ENCODE measurements at regions of chr5 and their contacts with region 1.

Region 1: GRCh38 chr5:36241631-36242533 is at the start of gene NADK2:
- DNase-seq: peak; percentile 83 to 97 (median 92)
- ATAC-seq: peak; percentile 85
- H3K4me3 ChIP-seq: peak within 1 kb of the TSS; percentile 78 to 81
- H3K4me3 Mint-ChIP-seq: peak within 1 kb of the TSS; percentile 87
- H3K27ac ChIP-seq: peak within 1 kb of the TSS; percentile 87 to 92
- H3K27ac Mint-ChIP-seq: peak within 1 kb of the TSS; percentile 89
- H3K4me1 ChIP-seq: peaks cover 22% of the 10 kb centered on the region
- H3K4me1 Mint-ChIP-seq: peaks cover 49% of the 10 kb centered on the region
- H3K27me3 ChIP-seq: no peaks in the 10 kb centered on the region
- H3K27me3 Mint-ChIP-seq: no peaks in the 10 kb centered on the region
- CTCF ChIP-seq: peak; percentile 59
- total RNA-seq, gene NADK2: 11.1 to 12.3 TPM

Region 2: DNA sequence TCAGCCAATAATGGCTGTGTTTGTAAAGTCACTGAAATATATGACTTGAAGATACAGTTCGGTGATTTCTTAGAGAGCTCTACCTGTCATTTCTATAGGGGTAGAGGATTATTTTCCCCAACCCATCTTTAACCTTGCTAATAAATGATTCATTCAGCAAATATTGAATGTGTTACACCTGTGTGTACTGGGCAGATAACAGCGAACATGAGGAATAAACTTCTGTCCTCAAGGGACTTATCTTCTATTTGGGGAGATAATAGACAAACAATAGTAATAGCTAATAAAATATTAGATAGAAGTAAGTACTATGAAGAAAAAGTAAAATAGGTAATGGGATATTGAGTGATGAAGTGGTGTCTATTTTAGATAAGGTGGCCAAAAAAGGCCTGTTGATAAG is 1393.7 kb before region 1 on chr5:
- CTCF ChIA-PET with region 1: no interaction called
- POLR2A ChIA-PET with region 1: interaction called, 10 read pairs
- intact Hi-C with region 1: no loop called
- DNase-seq: no peak
- ATAC-seq: no peak
- H3K4me3 ChIP-seq: no peak overlapping the region
- H3K4me3 Mint-ChIP-seq: no peak overlapping the region
- H3K27ac ChIP-seq: no peak overlapping the region
- H3K27ac Mint-ChIP-seq: no peak overlapping the region
- H3K4me1 ChIP-seq: no peaks in the 10 kb centered on the region
- H3K4me1 Mint-ChIP-seq: no peaks in the 10 kb centered on the region
- H3K27me3 ChIP-seq: no peaks in the 10 kb centered on the region
- H3K27me3 Mint-ChIP-seq: peaks cover 15% of the 10 kb centered on the region
- CTCF ChIP-seq: no peak

Region 3: GRCh38 chr5:34929150-34929719 is 1312.6 kb before region 1 on chr5 and contains the start of gene DNAJC21:
- CTCF ChIA-PET with region 1: no interaction called
- POLR2A ChIA-PET with region 1: interaction called, 5 read pairs
- intact Hi-C with region 1: loop called in 1 of 2 experiments (anchors 5 kb)
- DNase-seq: peak; percentile 94 to 99 (median 96)
- ATAC-seq: peak; percentile 90
- H3K4me3 ChIP-seq: peak within 1 kb of the TSS; percentile 72 to 87
- H3K4me3 Mint-ChIP-seq: peak within 1 kb of the TSS; percentile 97
- H3K27ac ChIP-seq: peak within 1 kb of the TSS; percentile 72 to 83
- H3K27ac Mint-ChIP-seq: peak within 1 kb of the TSS; percentile 94
- H3K4me1 ChIP-seq: peaks cover 27% of the 10 kb centered on the region
- H3K4me1 Mint-ChIP-seq: peaks cover 37% of the 10 kb centered on the region
- H3K27me3 ChIP-seq: no peaks in the 10 kb centered on the region
- H3K27me3 Mint-ChIP-seq: no peaks in the 10 kb centered on the region
- CTCF ChIP-seq: no peak
- total RNA-seq, gene DNAJC21: 55.7 to 56.6 TPM

Region 4: GRCh38 chr5:36507332-36507952 is 265.6 kb after region 1 on chr5:
- CTCF ChIA-PET with region 1: interaction called, 3 read pairs
- POLR2A ChIA-PET with region 1: no interaction called
- intact Hi-C with region 1: loop called (anchors 1 to 2 kb)
- DNase-seq: peak; percentile 18 to 79 (median 67)
- ATAC-seq: peak; percentile 26
- H3K4me3 ChIP-seq: no peak overlapping the region
- H3K4me3 Mint-ChIP-seq: no peak overlapping the region
- H3K27ac ChIP-seq: no peak overlapping the region
- H3K27ac Mint-ChIP-seq: no peak overlapping the region
- H3K4me1 ChIP-seq: no peaks in the 10 kb centered on the region
- H3K4me1 Mint-ChIP-seq: no peaks in the 10 kb centered on the region
- H3K27me3 ChIP-seq: no peaks in the 10 kb centered on the region
- H3K27me3 Mint-ChIP-seq: peaks cover 2% of the 10 kb centered on the region
- CTCF ChIP-seq: peak; percentile 90

Region 5: DNA sequence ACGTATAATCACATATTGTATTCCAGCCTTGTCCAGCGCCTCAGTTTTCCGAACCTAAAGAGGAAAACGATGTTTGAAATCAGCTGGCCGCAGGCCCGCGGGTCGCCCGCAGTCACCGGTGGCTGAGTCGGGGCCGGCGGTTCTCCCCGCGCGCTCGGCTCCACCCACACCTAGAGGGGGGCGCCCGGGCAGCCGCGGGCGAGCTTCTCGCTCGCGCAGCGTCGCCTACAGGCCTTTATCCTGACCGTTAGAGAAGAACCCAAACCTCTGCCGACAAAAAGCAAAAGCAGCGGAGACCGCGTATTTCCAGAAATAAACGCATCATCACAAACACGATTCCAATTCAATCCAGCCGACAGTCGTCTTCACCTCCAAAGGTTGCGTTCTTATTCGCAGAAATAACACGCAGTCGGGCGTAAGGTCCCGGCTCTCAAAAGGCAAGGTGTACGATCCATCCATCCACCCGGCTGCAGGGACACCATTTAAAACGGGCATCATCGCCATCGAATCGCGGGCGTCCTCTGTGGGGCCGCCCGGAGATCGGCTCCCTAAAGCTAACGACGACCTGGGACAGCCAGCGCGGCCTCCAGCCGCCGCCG is 634.0 kb after region 1 on chr5:
- CTCF ChIA-PET with region 1: no interaction called
- POLR2A ChIA-PET with region 1: interaction called, 3 read pairs
- intact Hi-C with region 1: loop called (anchors 2 to 5 kb)
- DNase-seq: peak; percentile 58 to 90 (median 76)
- ATAC-seq: peak; percentile 50
- H3K4me3 ChIP-seq: peak overlapping the region; percentile 91 to 94
- H3K4me3 Mint-ChIP-seq: peak overlapping the region; percentile 94
- H3K27ac ChIP-seq: peak overlapping the region; percentile 90 to 92
- H3K27ac Mint-ChIP-seq: peak overlapping the region; percentile 96
- H3K4me1 ChIP-seq: peaks cover 42% of the 10 kb centered on the region
- H3K4me1 Mint-ChIP-seq: peaks cover 59% of the 10 kb centered on the region
- H3K27me3 ChIP-seq: no peaks in the 10 kb centered on the region
- H3K27me3 Mint-ChIP-seq: no peaks in the 10 kb centered on the region
- CTCF ChIP-seq: peak; percentile 37

Region 6: DNA sequence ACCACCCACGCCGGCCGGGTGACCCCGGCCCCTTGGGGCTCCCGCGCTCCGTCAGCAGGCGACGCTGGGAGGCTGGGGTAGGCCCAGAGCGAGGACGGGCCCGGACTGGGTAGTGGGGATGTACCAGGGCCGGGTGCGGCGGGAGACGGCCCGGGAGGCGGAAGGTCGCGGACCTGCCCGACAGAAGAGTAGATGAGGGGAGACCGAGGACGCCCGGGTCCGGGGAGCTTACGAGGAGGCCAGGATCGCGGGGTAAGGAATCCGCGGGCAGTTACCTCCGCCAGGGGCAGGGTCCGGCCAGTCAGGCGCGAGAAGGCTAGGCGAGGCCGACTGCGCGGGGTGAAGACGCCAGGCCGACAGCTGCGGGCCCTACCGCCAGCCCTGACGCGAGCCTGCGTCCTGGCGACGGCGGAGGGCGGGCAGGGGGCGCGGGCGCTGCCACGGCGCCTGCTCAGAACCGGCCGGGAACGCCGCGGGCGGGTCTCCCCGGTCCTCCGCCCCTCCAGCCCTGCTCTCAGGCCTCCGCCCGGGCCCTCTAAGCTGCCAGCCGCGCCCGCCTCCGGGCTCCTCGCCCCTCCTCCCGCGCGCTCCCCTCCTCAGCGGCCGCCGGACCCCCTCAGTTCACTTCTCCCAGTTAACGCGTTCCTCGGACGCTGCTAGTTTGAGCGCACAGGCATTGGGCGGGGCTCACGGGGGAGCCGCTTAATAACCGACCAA is 1007.2 kb after region 1 on chr5 and contains the start of gene CPLANE1:
- CTCF ChIA-PET with region 1: no interaction called
- POLR2A ChIA-PET with region 1: no interaction called
- intact Hi-C with region 1: loop called in 1 of 2 experiments (anchors 10 kb)
- DNase-seq: peak; percentile 5 to 76 (median 54)
- ATAC-seq: peak; percentile 80
- H3K4me3 ChIP-seq: peak within 1 kb of the TSS; percentile 87 to 91
- H3K4me3 Mint-ChIP-seq: peak within 1 kb of the TSS; percentile 90
- H3K27ac ChIP-seq: peak within 1 kb of the TSS; percentile 63 to 73
- H3K27ac Mint-ChIP-seq: peak within 1 kb of the TSS; percentile 88
- H3K4me1 ChIP-seq: peaks cover 14% of the 10 kb centered on the region
- H3K4me1 Mint-ChIP-seq: peaks cover 12% of the 10 kb centered on the region
- H3K27me3 ChIP-seq: no peaks in the 10 kb centered on the region
- H3K27me3 Mint-ChIP-seq: no peaks in the 10 kb centered on the region
- CTCF ChIP-seq: no peak
- total RNA-seq, gene CPLANE1: 4.2 to 4.3 TPM

Region 7: DNA sequence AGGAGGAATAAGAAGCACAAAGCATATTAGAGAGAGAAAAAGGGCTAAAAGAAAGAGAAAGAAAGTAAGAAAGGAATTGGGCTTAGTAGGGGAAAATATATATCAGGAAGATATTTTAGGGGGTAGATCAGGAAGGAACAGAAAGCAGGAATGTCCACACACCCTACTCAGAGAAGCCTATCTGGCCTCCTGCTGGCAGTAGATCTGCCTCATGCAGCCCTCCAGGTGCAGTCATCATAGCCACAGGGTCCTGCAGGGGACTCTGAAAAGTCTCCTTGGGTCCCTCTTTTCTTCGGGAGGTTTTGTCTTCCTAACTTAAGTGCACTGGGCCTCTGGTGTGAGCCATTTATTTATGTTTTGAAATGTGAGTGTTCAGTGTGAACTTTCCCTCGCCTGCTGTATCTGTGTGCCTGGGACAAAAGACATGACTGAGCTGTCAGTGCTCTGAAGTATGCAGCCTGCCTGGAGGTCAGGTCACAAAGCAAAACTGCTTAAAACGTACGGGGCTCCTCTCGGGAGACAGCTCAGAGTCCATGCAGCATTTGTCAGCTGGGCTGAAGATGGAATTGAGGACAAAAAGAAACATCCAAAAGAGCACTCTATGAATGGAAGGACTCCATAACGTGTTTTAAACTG is 1749.5 kb after region 1 on chr5:
- CTCF ChIA-PET with region 1: no interaction called
- POLR2A ChIA-PET with region 1: no interaction called
- intact Hi-C with region 1: no loop called
- DNase-seq: no peak
- ATAC-seq: no peak
- H3K4me3 ChIP-seq: no peak overlapping the region
- H3K4me3 Mint-ChIP-seq: no peak overlapping the region
- H3K27ac ChIP-seq: no peak overlapping the region
- H3K27ac Mint-ChIP-seq: no peak overlapping the region
- H3K4me1 ChIP-seq: no peaks in the 10 kb centered on the region
- H3K4me1 Mint-ChIP-seq: no peaks in the 10 kb centered on the region
- H3K27me3 ChIP-seq: no peaks in the 10 kb centered on the region
- H3K27me3 Mint-ChIP-seq: no peaks in the 10 kb centered on the region
- CTCF ChIP-seq: no peak

Measured in CD8-positive, alpha-beta T cell (primary cell).